ENCODE measurements at regions of chr2 and their contacts with region 1.

Region 1: DNA sequence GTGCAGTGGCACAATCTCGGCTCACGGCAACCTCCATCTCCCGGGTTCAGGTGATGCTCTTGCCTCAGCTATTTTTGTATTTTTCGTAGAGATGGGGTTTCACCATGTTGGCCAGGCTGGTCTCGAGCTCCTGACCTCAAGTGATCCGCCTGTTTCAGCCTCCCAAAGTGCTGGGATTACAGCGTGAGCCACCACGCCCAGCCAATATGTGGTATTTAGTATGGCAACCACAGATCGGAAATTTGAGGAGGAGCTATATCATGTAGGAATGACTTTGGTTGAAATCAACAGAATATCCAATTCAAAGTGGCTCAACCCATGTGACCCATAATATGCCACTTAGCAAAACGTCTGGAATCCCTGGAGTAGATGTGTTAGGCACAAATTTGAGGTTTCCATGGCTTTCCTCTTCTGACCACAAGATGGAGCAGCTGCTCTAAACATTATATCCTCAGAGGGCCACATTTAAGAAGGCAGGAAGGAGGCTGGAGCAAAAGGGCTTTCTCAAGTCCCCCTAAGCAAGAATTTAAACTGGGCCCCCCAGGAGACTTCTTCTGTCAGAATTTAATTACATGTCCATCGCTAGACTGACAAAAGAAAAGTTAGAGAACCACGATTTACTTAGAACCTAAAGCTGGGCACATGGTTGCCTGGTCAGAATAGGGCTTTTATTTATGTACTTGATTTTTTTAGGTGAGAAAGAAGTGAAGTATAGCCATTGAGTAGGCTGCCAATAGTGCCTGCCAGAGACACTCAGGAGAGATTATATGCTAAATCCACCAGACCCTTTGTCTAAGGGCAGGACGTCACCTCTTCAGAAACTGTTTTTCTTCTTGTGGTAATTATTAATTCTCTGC is 49.6 kb upstream of the ITSN2 start:
- DNase-seq: peak; percentile 77

Region 2: GRCh38 chr2:24276349-24276899 is 133.5 kb before region 1 on chr2:
- in situ Hi-C with region 1: no loop called
- DNase-seq: no peak

Region 3: DNA sequence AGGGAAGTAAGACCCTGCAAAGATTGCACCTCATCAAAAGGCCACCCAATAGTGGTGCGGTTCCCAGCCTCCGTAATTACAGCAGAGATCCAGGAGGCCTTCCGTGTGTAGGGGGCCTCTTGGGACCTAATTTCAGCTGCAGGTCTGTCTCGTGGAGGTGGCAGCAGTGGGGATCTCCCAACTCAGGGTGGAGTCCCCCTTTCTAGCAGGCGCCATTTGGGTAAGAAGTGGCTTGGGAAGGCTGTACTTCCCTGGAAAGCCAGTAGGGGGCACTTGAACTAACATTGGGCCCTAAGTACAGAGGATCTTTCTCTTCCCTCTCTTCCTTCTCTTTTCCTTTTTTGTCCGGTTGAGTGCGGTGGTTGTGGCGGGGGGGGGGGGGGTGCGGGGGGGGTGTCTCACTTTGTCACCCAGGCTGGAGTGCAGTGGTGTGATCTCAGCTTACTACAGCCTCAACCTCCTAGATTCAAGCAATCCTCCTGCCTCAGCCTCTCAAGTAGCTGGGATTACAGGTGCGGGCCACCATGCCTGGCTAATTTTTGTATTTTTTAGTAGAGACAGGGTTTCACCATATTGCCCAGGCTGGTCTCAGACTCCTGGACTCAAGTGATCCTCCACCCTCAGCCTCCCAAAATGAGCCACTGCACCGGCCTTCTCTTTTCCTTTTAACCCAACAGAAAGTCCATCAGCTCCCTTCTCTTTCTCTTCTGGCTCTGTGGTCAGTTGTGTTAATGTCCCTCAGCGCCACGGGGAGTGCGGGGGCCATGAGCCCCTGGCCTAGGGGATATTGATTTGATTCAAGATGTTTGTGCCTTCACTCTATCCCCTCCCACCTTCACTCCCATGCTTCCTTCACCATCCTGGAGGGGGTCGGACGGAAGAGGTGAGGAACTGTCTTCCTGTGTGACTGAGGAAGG is 415.3 kb after region 1 on chr2:
- in situ Hi-C with region 1: loop called (anchors 25 kb)
- DNase-seq: peak; percentile 22

Measured in ACHN (cell line).